ENCODE measurements at regions of chr3 and their contacts with region 1.

Region 1: GRCh38 chr3:101588616-101589015 is 14.6 kb downstream of the PCNP start:
- DNase-seq: no peak
- H3K4me3 ChIP-seq: no peak overlapping the region
- H3K27ac ChIP-seq: no peak overlapping the region
- H3K4me1 ChIP-seq: no peaks in the 10 kb centered on the region
- H3K27me3 ChIP-seq: no peaks in the 10 kb centered on the region
- CTCF ChIP-seq: no peak
- POLR2A ChIP-seq: no peak

Region 2: DNA sequence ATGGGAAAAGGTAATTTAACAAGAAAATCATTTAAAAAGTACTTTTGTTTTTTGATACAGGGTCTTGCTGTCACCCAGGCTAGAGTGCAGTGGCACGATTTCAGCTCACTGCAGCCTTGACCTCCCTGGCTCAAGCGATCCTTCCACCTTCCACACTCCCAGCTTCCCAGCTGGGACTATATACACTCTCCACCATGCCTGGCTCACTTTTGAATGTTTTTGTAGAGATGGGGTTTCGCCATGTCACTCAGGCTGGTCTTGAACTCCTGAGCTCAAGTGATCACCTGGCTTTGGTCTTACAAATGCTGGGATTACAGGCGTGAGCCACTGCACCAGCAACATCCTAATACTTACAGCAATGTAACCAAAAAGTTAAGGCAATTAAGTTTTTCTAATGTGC is 91.8 kb after region 1 on chr3:
- intact Hi-C with region 1: loop called (anchors 5 kb)
- DNase-seq: no peak
- H3K4me3 ChIP-seq: no peak overlapping the region
- H3K27ac ChIP-seq: no peak overlapping the region
- H3K4me1 ChIP-seq: peaks cover 6 to 11% of the 10 kb centered on the region in 2 donors
- H3K27me3 ChIP-seq: no peaks in the 10 kb centered on the region
- CTCF ChIP-seq: no peak
- POLR2A ChIP-seq: no peak

Region 3: DNA sequence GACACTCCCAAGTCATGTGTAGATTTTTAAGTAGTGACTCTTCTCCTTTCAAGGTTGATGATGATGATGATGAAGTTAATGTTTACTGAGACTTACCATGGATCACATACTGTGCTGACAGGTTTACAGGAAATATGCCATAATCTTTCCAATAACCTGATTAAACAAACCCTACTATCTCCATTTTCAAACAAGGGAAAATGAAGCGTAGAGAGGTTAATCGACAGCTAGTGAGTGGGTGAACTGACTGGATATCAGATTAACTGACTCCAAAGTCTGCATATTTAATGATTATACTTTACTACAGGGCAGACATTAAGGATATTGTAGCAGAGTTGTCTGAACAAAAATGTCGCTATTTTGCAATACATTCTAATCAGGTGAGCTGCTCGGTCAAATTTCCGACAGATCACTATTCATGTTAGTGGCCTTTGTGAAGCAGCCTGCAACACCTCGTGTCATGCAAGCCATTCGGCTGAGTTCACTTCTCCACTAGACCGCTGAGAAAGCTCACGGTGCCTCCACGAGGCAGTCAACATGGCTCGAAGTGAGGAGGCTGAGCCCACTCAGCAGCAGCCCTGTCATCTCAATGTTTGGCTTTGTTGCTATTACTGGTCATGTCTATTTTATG is 524.9 kb after region 1 on chr3:
- intact Hi-C with region 1: no loop called
- DNase-seq: no peak
- H3K4me3 ChIP-seq: no peak overlapping the region
- H3K27ac ChIP-seq: no peak overlapping the region
- H3K4me1 ChIP-seq: no peaks in the 10 kb centered on the region
- H3K27me3 ChIP-seq: no peaks in the 10 kb centered on the region
- CTCF ChIP-seq: no peak
- POLR2A ChIP-seq: no peak

Measured in breast epithelium (tissue), 4 donors.